Naive thymus-derived CD4-positive, alpha-beta T cell (primary cell): ENCODE measurements at regions of chrX and their contacts with region 1.

Region 1: DNA sequence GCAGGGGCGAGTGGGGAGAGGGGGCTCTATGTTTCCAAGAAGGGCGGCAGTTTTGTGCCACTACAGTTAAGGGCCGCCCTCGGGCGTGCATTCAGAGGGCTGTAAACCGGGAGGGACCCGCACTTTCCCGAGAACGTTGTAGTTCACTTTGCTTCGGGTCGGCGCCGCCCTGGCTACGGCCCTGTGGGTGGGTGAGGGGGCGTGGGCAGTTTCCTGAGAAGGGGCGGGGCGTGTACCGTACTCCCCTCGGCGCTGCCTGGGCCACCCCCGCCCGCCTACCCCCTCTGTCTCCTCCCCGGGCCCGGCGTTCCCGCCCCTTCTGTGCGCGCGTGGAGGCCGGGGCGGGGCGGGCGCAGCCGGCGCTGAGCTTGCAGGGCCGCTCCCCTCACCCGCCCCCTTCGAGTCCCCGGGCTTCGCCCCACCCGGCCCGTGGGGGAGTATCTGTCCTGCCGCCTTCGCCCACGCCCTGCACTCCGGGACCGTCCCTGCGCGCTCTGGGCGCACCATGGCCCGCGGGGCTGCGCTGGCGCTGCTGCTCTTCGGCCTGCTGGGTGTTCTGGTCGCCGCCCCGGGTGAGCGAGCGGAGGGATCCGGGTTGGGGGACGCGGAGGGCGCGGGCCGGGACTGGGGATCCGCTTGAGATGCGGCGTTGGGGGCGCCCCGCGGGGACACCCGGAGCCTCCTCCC is at the start of gene CD99:
- DNase-seq: peak; percentile 81 to 93 (median 85)
- ATAC-seq: peak; percentile 96
- H3K4me3 ChIP-seq: peak within 1 kb of the TSS; percentile 91
- H3K4me3 Mint-ChIP-seq: peak within 1 kb of the TSS; percentile 87 to 98 (median 95)
- H3K27ac ChIP-seq: peak within 1 kb of the TSS; percentile 83
- H3K27ac Mint-ChIP-seq: peak within 1 kb of the TSS; percentile 80 to 95 (median 91)
- H3K4me1 ChIP-seq: peaks cover 31 to 33% of the 10 kb centered on the region in 2 donors
- H3K4me1 Mint-ChIP-seq: peaks cover 36 to 42% (median 39%) of the 10 kb centered on the region in 7 donors
- H3K27me3 ChIP-seq: no peaks in the 10 kb centered on the region
- H3K27me3 Mint-ChIP-seq: peaks cover 0 to 11% (median 0%) of the 10 kb centered on the region in 5 donors
- total RNA-seq, gene CD99: 112 to 293 (median 181) TPM

Region 2: DNA sequence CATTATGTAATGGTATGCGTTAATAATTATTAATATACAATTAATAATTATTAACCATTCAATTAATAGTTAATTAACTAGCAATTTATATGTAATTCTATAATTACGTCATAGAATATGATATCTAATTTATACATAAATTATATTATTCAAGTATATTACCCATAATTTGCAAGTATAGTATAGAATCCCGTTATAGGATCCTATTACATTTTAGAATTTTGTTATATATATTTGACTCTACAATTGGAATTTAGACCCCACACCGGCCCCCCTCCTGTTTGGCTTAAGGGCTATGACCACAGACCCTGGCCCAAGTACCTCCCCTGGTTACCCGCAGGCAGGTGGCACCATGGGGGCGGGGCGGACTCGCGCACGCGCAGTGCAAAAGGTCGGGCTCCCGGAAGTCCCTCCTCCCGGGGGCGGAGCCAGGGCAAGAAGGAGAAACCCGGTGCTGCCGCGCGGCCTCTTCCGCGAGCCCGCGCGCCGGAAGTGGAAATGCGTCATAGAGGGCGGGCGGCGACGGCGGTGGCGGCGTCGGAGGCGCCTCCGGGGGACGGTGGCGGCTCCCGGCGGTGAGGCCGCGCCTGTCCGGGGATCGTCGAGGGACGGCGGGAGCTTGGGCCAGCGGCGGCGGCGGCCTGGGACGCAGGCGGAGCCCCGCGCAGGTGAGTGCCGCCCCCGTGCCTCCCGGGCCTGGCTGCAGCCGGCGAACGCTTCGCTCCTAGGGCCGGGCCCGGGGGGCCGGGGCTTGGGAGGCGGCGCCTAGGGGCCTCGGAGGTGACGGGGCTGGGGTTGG is 1099.7 kb before region 1 on chrX and contains the start of gene AKAP17A:
- CTCF ChIA-PET with region 1: no interaction called
- POLR2A ChIA-PET with region 1: no interaction called
- intact Hi-C with region 1: loop called in 1 of 2 experiments (anchors 2 kb)
- DNase-seq: peak; percentile 92 to 100 (median 99)
- ATAC-seq: peak; percentile 95
- H3K4me3 ChIP-seq: peak within 1 kb of the TSS; percentile 76
- H3K4me3 Mint-ChIP-seq: peak within 1 kb of the TSS; percentile 85 to 97 (median 91)
- H3K27ac ChIP-seq: peak within 1 kb of the TSS; percentile 91
- H3K27ac Mint-ChIP-seq: peak within 1 kb of the TSS; percentile 82 to 94 (median 91)
- H3K4me1 ChIP-seq: peaks cover 7 to 10% of the 10 kb centered on the region in 2 donors
- H3K4me1 Mint-ChIP-seq: peaks cover 5 to 50% (median 34%) of the 10 kb centered on the region in 7 donors
- H3K27me3 ChIP-seq: no peaks in the 10 kb centered on the region
- H3K27me3 Mint-ChIP-seq: no peaks in the 10 kb centered on the region
- total RNA-seq, gene AKAP17A: 75.7 to 165 (median 125) TPM

Region 3: GRCh38 chrX:2627272-2627867 is 63.6 kb before region 1 on chrX:
- CTCF ChIA-PET with region 1: no interaction called
- POLR2A ChIA-PET with region 1: no interaction called
- intact Hi-C with region 1: loop called (anchors 1 to 2 kb)
- DNase-seq: peak in 7 of 9 donors; percentile 34 to 49 (median 40)
- ATAC-seq: peak; percentile 61
- H3K4me3 ChIP-seq: no peak overlapping the region
- H3K4me3 Mint-ChIP-seq: peak overlapping the region in 3 of 10 donors; percentile 19 to 33 (median 20)
- H3K27ac ChIP-seq: no peak overlapping the region
- H3K27ac Mint-ChIP-seq: peak overlapping the region in 6 of 9 donors; percentile 28 to 100 (median 56)
- H3K4me1 ChIP-seq: peaks cover 16% of the 10 kb centered on the region in 2 donors
- H3K4me1 Mint-ChIP-seq: peaks cover 23 to 53% (median 51%) of the 10 kb centered on the region in 7 donors
- H3K27me3 ChIP-seq: no peaks in the 10 kb centered on the region
- H3K27me3 Mint-ChIP-seq: no peaks in the 10 kb centered on the region

Region 4: GRCh38 chrX:2732076-2732475 is 41.1 kb after region 1 on chrX:
- CTCF ChIA-PET with region 1: no interaction called
- POLR2A ChIA-PET with region 1: no interaction called
- intact Hi-C with region 1: loop called (anchors 5 kb)
- DNase-seq: no peak
- ATAC-seq: no peak
- H3K4me3 ChIP-seq: no peak overlapping the region
- H3K4me3 Mint-ChIP-seq: no peak overlapping the region
- H3K27ac ChIP-seq: no peak overlapping the region
- H3K27ac Mint-ChIP-seq: peak overlapping the region in 3 of 9 donors; percentile 14 to 81 (median 68)
- H3K4me1 ChIP-seq: no peaks in the 10 kb centered on the region
- H3K4me1 Mint-ChIP-seq: peaks cover 0 to 15% (median 8%) of the 10 kb centered on the region in 7 donors
- H3K27me3 ChIP-seq: peaks cover 0 to 4% of the 10 kb centered on the region in 2 donors
- H3K27me3 Mint-ChIP-seq: no peaks in the 10 kb centered on the region